ENCODE measurements at regions of chr13 and their contacts with region 1.

Region 1: DNA sequence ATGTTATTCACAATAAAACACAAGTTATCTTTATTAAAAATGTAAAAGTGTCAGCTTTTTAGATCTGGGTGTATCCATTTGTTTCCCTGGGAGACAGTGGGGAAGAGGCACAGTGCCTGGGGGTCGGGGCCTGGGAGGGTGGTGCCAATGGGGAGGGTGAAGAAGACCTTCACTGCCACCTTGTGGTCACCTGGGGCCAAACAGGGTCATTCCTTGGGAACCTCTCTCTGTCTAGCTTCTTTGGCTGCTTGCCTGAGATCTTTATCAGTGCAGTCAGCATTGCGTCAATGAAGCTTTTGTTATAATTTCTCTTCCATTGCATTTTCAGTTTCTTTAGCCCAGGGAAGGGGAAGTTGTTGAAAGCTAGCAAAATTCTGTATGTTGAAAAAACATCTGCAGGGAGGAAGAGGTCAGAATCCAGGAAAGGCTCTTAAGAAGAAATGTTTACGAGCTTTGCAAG is 39.1 kb downstream of the PCDH8 start:
- DNase-seq: peak; percentile 61 to 88
- H3K4me3 ChIP-seq: no peak overlapping the region
- H3K27ac ChIP-seq: no peak overlapping the region
- H3K4me1 ChIP-seq: peaks cover 0 to 6% (median 4%) of the 10 kb centered on the region in 4 experiments; a peak in 4 of 7 replicates
- H3K27me3 ChIP-seq: no peaks in the 10 kb centered on the region
- CTCF ChIP-seq: peak; percentile 85 to 91 (median 86)
- EP300 ChIP-seq: no peak
- POLR2A ChIP-seq: no peak
- RAD21 ChIP-seq: peak; percentile 96 to 97

Region 2: DNA sequence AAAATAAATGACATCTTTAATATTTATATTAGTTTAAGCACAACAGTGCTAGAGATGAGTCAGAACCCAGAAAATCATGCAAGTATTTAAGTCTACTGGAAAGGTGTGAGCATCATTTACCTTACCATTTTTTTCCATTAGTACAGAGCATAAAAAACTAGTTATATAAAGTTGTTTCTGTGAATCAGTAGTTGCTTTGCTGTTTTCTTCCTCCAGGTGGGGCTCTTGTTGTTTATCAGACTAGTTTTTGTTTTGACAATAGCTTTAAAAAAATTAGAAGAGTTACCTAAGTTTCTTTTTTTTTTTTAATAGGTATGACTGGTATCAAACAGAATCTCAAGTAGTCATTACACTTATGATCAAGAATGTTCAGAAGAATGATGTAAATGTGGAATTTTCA is 144.0 kb before region 1 on chr13:
- CTCF ChIA-PET with region 1: interaction called, 75 read pairs
- POLR2A ChIA-PET with region 1: interaction called, 4 read pairs
- DNase-seq: no peak
- H3K4me3 ChIP-seq: no peak overlapping the region
- H3K27ac ChIP-seq: no peak overlapping the region
- H3K4me1 ChIP-seq: no peaks in the 10 kb centered on the region
- H3K27me3 ChIP-seq: no peaks in the 10 kb centered on the region
- CTCF ChIP-seq: peak in 2 of 3 experiments; percentile 23 to 37; a peak in 2 of 4 replicates
- EP300 ChIP-seq: no peak
- POLR2A ChIP-seq: no peak
- RAD21 ChIP-seq: peak in 1 of 2 experiments; percentile 54; a peak in 3 of 4 replicates

Region 3: GRCh38 chr13:52701728-52702465 is 107.4 kb before region 1 on chr13:
- CTCF ChIA-PET with region 1: interaction called, 16 read pairs
- POLR2A ChIA-PET with region 1: interaction called, 3 read pairs
- DNase-seq: no peak
- H3K4me3 ChIP-seq: no peak overlapping the region
- H3K27ac ChIP-seq: no peak overlapping the region
- H3K4me1 ChIP-seq: peaks cover 0 to 3% (median 1%) of the 10 kb centered on the region in 4 experiments; a peak in 3 of 7 replicates
- H3K27me3 ChIP-seq: no peaks in the 10 kb centered on the region
- CTCF ChIP-seq: no peak
- EP300 ChIP-seq: no peak
- POLR2A ChIP-seq: no peak
- RAD21 ChIP-seq: no peak

Region 4: GRCh38 chr13:52723181-52723580 is 86.2 kb before region 1 on chr13:
- CTCF ChIA-PET with region 1: interaction called, 12 read pairs
- POLR2A ChIA-PET with region 1: interaction called, 3 read pairs
- DNase-seq: no peak
- H3K4me3 ChIP-seq: no peak overlapping the region
- H3K27ac ChIP-seq: no peak overlapping the region
- H3K4me1 ChIP-seq: no peaks in the 10 kb centered on the region
- H3K27me3 ChIP-seq: no peaks in the 10 kb centered on the region
- CTCF ChIP-seq: no peak
- EP300 ChIP-seq: no peak
- POLR2A ChIP-seq: no peak
- RAD21 ChIP-seq: no peak

Region 5: GRCh38 chr13:52749419-52749818 is 59.9 kb before region 1 on chr13:
- CTCF ChIA-PET with region 1: interaction called, 14 read pairs
- POLR2A ChIA-PET with region 1: no interaction called
- DNase-seq: no peak
- H3K4me3 ChIP-seq: no peak overlapping the region
- H3K27ac ChIP-seq: no peak overlapping the region
- H3K4me1 ChIP-seq: no peaks in the 10 kb centered on the region
- H3K27me3 ChIP-seq: no peaks in the 10 kb centered on the region; a peak in 1 of 7 replicates
- CTCF ChIP-seq: no peak
- EP300 ChIP-seq: no peak
- POLR2A ChIP-seq: no peak
- RAD21 ChIP-seq: no peak

Region 6: DNA sequence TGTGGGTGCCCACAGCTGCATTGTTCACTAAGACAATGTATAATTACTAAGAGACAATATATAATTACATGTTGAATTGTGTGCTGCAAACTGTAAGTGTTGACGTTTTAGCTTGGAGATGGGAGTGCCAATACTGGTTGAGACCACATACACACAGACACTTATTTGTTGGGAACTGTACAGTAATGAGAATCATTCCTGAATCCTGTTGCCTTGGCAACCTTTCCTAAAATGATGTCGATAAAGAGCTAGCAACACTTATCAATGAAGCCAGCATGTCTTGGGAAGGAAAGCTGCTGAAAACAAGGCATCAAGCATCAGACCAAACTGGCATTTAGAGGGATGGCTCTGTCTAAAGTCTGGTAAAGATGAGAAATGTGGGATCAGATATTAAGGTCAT is 12.2 kb before region 1 on chr13:
- CTCF ChIA-PET with region 1: interaction called, 31 read pairs
- POLR2A ChIA-PET with region 1: interaction called, 3 read pairs
- DNase-seq: no peak
- H3K4me3 ChIP-seq: no peak overlapping the region
- H3K27ac ChIP-seq: no peak overlapping the region
- H3K4me1 ChIP-seq: no peaks in the 10 kb centered on the region
- H3K27me3 ChIP-seq: no peaks in the 10 kb centered on the region
- CTCF ChIP-seq: no peak
- EP300 ChIP-seq: no peak
- POLR2A ChIP-seq: no peak
- RAD21 ChIP-seq: no peak

Region 7: GRCh38 chr13:52884429-52885010 is 75.2 kb after region 1 on chr13:
- CTCF ChIA-PET with region 1: no interaction called
- POLR2A ChIA-PET with region 1: no interaction called
- DNase-seq: no peak
- H3K4me3 ChIP-seq: no peak overlapping the region
- H3K27ac ChIP-seq: no peak overlapping the region
- H3K4me1 ChIP-seq: peaks cover 8 to 26% (median 22%) of the 10 kb centered on the region in 4 experiments
- H3K27me3 ChIP-seq: peaks cover 6 to 19% (median 15%) of the 10 kb centered on the region in 4 experiments
- CTCF ChIP-seq: no peak
- EP300 ChIP-seq: no peak
- POLR2A ChIP-seq: no peak
- RAD21 ChIP-seq: no peak

Region 8: GRCh38 chr13:53200498-53201453 is 391.4 kb after region 1 on chr13:
- CTCF ChIA-PET with region 1: interaction called, 12 read pairs
- POLR2A ChIA-PET with region 1: no interaction called
- DNase-seq: peak; percentile 62 to 92
- H3K4me3 ChIP-seq: peak overlapping the region; percentile 34 to 59 (median 40)
- H3K27ac ChIP-seq: no peak overlapping the region
- H3K4me1 ChIP-seq: peaks cover 0 to 7% (median 4%) of the 10 kb centered on the region in 4 experiments; a peak in 4 of 7 replicates
- H3K27me3 ChIP-seq: peaks cover 20 to 33% (median 32%) of the 10 kb centered on the region in 4 experiments
- CTCF ChIP-seq: peak; percentile 92 to 99 (median 93)
- EP300 ChIP-seq: peak in 1 of 2 experiments; percentile 58; a peak in 1 of 3 replicates
- POLR2A ChIP-seq: no peak
- RAD21 ChIP-seq: peak; percentile 68 to 76

Measured in H1 (cell line).